Heart right ventricle (tissue), 16 donors: ENCODE measurements at regions of chr1 and their contacts with region 1.

Region 1: GRCh38 chr1:160376525-160377131 is 9.8 kb downstream of the NHLH1 start:
- DNase-seq: peak in 1 of 2 donors; percentile 42
- ATAC-seq: peak; percentile 64 to 87 (median 82)
- H3K4me3 ChIP-seq: peak overlapping the region in 1 of 10 donors; percentile 13
- H3K27ac ChIP-seq: peak overlapping the region in 1 of 10 donors; percentile 56
- H3K4me1 ChIP-seq: peaks cover 5 to 28% (median 10%) of the 10 kb centered on the region in 9 donors
- H3K27me3 ChIP-seq: peaks cover 0 to 18% (median 0%) of the 10 kb centered on the region in 7 donors
- CTCF ChIP-seq: peak; percentile 72 to 92 (median 85)

Region 2: GRCh38 chr1:160085686-160086455 is 290.8 kb before region 1 on chr1:
- intact Hi-C with region 1: loop called in 2 of 10 experiments (anchors 10 kb)
- DNase-seq: peak; percentile 76 to 84
- ATAC-seq: peak; percentile 59 to 87 (median 75)
- H3K4me3 ChIP-seq: no peak overlapping the region
- H3K27ac ChIP-seq: peak overlapping the region in 5 of 10 donors; percentile 42 to 71 (median 69)
- H3K4me1 ChIP-seq: peaks cover 0 to 11% (median 7%) of the 10 kb centered on the region in 9 donors
- H3K27me3 ChIP-seq: peaks cover 0 to 41% (median 36%) of the 10 kb centered on the region in 7 donors
- CTCF ChIP-seq: peak; percentile 75 to 92 (median 85)

Region 3: DNA sequence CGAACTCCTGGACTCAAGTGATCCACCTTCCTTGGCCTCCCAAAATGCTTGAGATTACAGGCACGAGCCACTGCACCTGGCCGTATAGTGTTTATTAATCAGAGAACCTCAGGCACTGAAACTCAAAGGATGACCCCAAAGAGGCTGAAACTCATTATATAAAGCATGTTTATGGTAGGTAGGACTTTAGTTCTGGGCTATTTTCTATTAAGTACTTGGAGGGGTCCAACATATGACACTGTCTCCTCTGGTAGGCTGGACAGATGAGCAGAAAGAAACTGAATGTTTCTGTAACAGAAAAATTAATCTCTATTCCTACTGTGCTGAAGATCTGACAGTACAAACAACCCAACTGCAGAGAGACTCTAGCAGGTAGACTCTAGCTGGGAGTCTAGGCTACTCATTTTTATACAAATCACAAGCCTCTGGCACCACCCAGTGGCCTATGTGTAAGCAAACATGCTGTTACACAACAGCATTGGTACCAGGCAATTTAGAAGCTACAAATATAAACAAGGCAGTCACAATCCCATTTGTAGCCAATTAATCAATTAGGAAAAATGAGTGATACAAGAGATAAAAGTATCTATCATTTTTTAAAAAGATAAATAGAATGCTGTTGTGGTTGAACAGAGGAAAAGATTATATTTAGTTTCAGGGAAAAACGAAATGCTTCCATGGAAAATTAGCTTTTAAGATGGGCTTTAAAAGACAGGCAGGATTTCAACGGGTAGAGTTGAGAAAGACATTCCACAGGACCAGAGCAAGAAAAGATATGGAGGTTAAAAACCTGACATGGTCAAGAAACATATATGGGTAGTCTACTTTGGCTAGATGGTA is 124.7 kb before region 1 on chr1:
- intact Hi-C with region 1: no loop called
- DNase-seq: peak in 1 of 2 donors; percentile 78
- ATAC-seq: peak; percentile 88 to 97 (median 93)
- H3K4me3 ChIP-seq: no peak overlapping the region
- H3K27ac ChIP-seq: peak overlapping the region in 6 of 10 donors; percentile 15 to 51 (median 44)
- H3K4me1 ChIP-seq: peaks cover 0 to 54% (median 30%) of the 10 kb centered on the region in 9 donors
- H3K27me3 ChIP-seq: no peaks in the 10 kb centered on the region
- CTCF ChIP-seq: peak; percentile 42 to 84 (median 71)

Region 4: GRCh38 chr1:160342526-160342925 is 34.1 kb before region 1 on chr1:
- intact Hi-C with region 1: no loop called
- DNase-seq: no peak
- ATAC-seq: peak in 7 of 8 donors; percentile 2 to 46 (median 20)
- H3K4me3 ChIP-seq: peak overlapping the region; percentile 63 to 96 (median 82)
- H3K27ac ChIP-seq: peak overlapping the region; percentile 51 to 97 (median 90)
- H3K4me1 ChIP-seq: peaks cover 0 to 84% (median 41%) of the 10 kb centered on the region in 9 donors
- H3K27me3 ChIP-seq: no peaks in the 10 kb centered on the region
- CTCF ChIP-seq: no peak

Region 5: DNA sequence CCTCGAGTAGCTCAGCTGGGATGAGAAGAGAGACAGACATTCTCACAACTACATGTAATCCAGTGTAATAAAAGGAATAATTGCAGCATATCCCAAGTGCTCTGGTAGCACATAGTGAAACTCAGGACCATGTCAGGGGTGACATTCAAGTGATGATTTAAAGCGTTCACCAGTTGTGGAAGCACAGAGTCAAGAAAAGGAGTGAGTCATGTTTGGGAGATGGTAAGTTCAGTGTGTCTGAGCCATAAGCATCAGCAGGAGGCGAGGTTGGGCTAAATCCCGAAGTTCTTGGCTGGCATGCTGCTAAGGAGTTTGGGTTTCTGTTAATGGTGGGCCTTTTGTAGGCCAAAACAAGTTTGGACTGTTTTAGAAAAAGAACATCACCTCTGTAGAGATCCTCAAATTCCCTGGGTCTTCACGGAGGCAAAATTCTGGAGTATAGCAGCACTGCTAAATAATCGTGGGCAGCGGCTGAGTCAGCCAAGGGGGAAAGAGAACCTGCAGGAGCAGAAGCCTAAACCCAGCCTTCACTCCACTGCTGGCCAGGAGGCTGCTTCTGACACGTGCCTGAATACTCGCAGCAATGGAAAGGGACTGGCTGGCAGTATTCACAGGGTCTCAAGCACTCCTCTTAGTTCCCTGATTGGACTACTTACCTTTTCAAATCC is 16.9 kb before region 1 on chr1:
- intact Hi-C with region 1: loop called in 1 of 10 experiments (anchors 1 kb)
- DNase-seq: no peak
- ATAC-seq: no peak
- H3K4me3 ChIP-seq: no peak overlapping the region
- H3K27ac ChIP-seq: no peak overlapping the region
- H3K4me1 ChIP-seq: no peaks in the 10 kb centered on the region
- H3K27me3 ChIP-seq: no peaks in the 10 kb centered on the region
- CTCF ChIP-seq: no peak